Activated naive CD4-positive, alpha-beta T cell treated with anti-CD3 and anti-CD28 coated beads, Interleukin-2, amount 10 ng/mL, durations not matched to agents 7 days and 5 days (primary cell): ENCODE measurements at regions of chrX and their contacts with region 1.

Region 1: DNA sequence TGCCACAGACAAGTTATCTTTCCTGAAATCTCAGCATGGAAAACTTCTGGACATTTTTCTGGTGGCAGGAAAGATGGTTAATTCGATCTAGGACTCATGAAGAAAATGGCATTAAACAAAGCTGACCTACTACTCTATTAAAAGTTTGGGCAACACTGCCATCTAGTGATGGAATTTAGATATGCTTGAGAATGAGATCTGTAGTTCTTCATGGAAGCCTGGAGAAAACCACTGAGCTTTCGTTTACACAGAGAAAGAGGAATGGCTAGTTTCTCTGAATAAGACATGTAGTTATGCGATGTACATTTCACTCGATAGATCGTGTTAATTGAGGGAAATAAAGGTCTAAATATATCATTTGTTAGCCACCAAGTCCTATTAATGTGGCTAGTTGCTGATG is 51.7 kb upstream of the CHRDL1 start:
- DNase-seq: no peak
- H3K4me3 Mint-ChIP-seq: no peak overlapping the region
- H3K27ac Mint-ChIP-seq: no peak overlapping the region
- H3K4me1 Mint-ChIP-seq: no peaks in the 10 kb centered on the region
- H3K27me3 Mint-ChIP-seq: no peaks in the 10 kb centered on the region

Region 2: DNA sequence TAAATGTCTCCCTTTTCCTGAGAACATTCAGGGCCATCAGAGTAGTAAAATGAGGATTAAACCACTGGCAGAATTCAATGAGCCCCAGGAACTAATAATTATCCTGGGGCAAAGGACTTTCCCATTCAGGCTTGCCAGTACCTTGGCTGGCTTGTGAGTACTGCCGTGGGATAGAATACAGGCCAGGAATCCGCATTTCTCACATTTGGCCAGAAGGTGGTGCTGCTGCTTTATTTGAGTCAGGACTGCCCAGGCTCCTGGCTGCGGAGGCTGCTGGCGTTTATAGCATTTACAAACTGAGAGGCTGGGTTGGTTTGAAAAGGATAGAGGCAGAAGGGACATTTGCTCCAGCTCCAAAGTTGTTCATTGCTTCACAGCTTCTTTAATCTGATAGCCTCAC is 397.3 kb before region 1 on chrX:
- CTCF ChIA-PET with region 1: interaction called, 10 read pairs
- DNase-seq: peak; percentile 67
- H3K4me3 Mint-ChIP-seq: no peak overlapping the region
- H3K27ac Mint-ChIP-seq: no peak overlapping the region
- H3K4me1 Mint-ChIP-seq: no peaks in the 10 kb centered on the region
- H3K27me3 Mint-ChIP-seq: peaks cover 7% of the 10 kb centered on the region

Region 3: DNA sequence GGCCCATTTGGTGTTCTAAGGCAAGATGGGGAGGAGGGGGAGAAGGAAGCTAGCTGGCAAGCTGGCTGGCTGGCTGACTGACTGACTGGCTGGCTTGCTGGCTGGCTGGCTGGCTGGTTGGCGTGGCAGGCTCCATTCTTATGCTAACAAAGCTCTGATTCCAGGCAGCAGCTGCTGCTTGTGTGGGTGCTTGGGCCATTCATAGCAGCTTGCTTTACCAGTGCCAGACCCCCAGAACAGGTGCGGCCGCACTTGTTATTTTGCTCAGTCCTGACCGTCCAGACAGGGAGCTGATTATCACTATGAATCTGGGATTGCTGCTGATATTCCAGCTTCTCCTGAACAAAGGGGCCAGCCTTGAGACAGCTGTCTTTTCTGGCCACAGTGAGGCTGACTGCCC is 117.5 kb after region 1 on chrX:
- CTCF ChIA-PET with region 1: no interaction called
- DNase-seq: no peak
- H3K4me3 Mint-ChIP-seq: no peak overlapping the region
- H3K27ac Mint-ChIP-seq: no peak overlapping the region
- H3K4me1 Mint-ChIP-seq: no peaks in the 10 kb centered on the region
- H3K27me3 Mint-ChIP-seq: no peaks in the 10 kb centered on the region